ENCODE measurements at regions of chr3 and their contacts with region 1.

Region 1: GRCh38 chr3:115052906-115053305 is 94.2 kb downstream of the ZBTB20 start:
- DNase-seq: no peak
- ATAC-seq: no peak
- H3K4me3 Mint-ChIP-seq: no peak overlapping the region
- H3K27ac Mint-ChIP-seq: no peak overlapping the region
- H3K4me1 Mint-ChIP-seq: no peaks in the 10 kb centered on the region
- H3K27me3 Mint-ChIP-seq: no peaks in the 10 kb centered on the region

Region 2: GRCh38 chr3:114809668-114810413 is 243.1 kb before region 1 on chr3:
- CTCF ChIA-PET with region 1: no interaction called
- POLR2A ChIA-PET with region 1: no interaction called
- DNase-seq: peak; percentile 23
- ATAC-seq: peak; percentile 76
- H3K4me3 Mint-ChIP-seq: peak overlapping the region; percentile 21
- H3K27ac Mint-ChIP-seq: peak overlapping the region; percentile 10
- H3K4me1 Mint-ChIP-seq: peaks cover 9% of the 10 kb centered on the region
- H3K27me3 Mint-ChIP-seq: no peaks in the 10 kb centered on the region

Region 3: DNA sequence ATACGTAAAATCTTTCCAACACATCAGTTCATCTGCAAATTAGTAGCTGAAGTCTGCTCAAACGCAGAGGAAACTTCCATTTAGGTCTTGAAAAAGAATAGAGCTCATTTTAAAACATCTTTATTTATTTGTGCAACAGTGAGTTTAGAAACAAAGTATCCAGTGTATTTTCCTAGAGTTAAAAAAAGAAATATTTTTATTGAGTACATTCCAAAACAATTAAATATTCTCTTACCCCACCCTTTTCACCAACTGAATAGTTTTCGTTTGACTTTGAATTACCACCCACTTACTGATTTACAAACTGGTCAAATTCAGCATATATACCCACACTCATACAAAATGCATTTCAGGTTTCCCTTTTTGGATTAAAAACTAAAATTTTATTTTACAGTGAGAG is 10.6 kb before region 1 on chr3:
- CTCF ChIA-PET with region 1: interaction called, 10 read pairs
- POLR2A ChIA-PET with region 1: no interaction called
- DNase-seq: no peak
- ATAC-seq: no peak
- H3K4me3 Mint-ChIP-seq: no peak overlapping the region
- H3K27ac Mint-ChIP-seq: no peak overlapping the region
- H3K4me1 Mint-ChIP-seq: no peaks in the 10 kb centered on the region
- H3K27me3 Mint-ChIP-seq: no peaks in the 10 kb centered on the region

Region 4: DNA sequence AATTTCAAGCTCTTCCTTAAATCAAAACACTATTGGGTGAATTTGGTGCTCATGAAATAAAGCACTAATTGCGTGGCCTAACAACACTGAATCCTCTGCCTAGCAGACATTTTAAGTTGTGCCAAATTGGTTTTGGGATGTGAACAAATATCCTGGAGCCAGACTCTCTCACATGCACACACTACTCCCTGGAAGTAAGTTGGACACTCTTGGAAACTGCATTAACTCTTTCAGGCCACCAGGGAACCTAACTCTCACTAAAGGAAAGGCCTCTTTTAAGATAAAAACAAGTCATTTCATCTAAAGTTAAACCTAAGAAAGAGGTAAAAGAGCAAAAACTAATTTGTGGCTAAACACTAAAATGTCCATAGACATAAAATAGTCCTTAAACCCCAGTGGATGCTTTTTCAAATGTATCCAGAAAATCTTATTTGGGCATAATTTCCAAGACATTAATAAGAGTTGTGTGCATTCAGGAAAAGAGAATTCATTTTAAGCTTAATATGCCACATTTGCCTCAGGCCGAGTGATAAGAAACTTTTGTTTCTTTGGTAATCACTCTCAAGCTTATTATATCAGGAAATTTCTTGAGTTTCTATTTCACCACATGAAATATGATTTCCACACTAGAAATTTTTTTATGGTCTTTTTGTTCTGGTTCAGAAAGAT is 32.4 kb after region 1 on chr3:
- CTCF ChIA-PET with region 1: no interaction called
- POLR2A ChIA-PET with region 1: no interaction called
- DNase-seq: no peak
- ATAC-seq: no peak
- H3K4me3 Mint-ChIP-seq: no peak overlapping the region
- H3K27ac Mint-ChIP-seq: no peak overlapping the region
- H3K4me1 Mint-ChIP-seq: no peaks in the 10 kb centered on the region
- H3K27me3 Mint-ChIP-seq: no peaks in the 10 kb centered on the region

Measured in activated CD8-positive, alpha-beta T cell treated with anti-CD3 and anti-CD28 coated beads, Interleukin-2, amount 10 ng/mL, durations not matched to agents 7 days and 5 days (primary cell).